ENCODE measurements at regions of chr16 and their contacts with region 1.

Region 1: GRCh38 chr16:31202414-31203375 is at the start of gene PYCARD:
- DNase-seq: peak; percentile 61
- ATAC-seq: peak; percentile 32
- H3K4me3 Mint-ChIP-seq: peak within 1 kb of the TSS; percentile 91
- H3K27ac Mint-ChIP-seq: peak within 1 kb of the TSS; percentile 86
- H3K4me1 Mint-ChIP-seq: peaks cover 56% of the 10 kb centered on the region
- H3K27me3 Mint-ChIP-seq: no peaks in the 10 kb centered on the region
- CTCF ChIP-seq: no peak
- total RNA-seq, gene PYCARD: 21.7 and 27.8 TPM in 2 replicates

Region 2: DNA sequence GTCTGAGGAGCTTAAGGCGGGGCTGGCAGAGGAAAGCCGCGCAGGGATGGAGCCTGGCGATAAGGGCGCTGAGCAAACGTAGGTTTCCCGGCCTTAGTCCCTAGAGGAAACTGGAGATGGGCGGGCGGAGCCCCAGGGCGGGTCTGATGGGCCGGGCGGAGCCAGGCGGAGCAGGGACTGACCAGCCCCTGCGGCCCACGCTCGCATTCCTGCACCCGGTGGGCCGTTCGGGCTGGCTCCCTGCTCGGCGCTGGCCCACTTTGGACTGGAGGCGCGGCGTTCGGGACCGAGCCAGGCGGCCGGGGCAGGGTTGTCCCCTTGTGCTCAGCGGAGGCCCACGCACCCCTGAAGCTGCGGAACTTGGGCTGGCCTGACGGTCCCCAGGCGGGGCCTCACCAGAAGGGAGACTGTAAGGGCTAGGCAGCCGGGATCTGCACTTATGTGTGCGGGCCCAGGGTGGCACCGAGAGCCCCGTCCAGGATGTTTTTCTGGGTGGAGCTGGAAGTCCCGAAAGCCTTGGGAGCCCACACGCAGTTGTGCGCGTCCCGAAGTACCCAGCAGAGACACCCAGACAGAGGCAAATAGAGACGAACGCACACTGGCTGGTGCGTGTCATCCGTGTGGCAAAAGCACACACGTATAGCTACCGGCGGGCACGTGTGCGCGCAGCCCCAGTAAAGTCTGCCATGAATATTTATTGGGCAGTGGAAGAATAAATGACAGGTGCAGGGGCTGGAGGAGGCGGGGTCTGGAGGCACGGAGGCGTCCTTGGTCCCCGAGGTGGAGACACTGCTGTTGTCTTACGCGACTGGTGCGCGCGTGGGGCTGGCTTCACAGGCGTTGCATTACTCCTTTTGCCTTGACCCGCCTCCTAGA is 12.8 kb after region 1 on chr16:
- CTCF ChIA-PET with region 1: interaction called, 5 read pairs
- POLR2A ChIA-PET with region 1: interaction called, 34 read pairs
- intact Hi-C with region 1: loop called (anchors 1 kb)
- DNase-seq: peak; percentile 37
- ATAC-seq: peak; percentile 63
- H3K4me3 Mint-ChIP-seq: peak overlapping the region; percentile 83
- H3K27ac Mint-ChIP-seq: no peak overlapping the region
- H3K4me1 Mint-ChIP-seq: peaks cover 48% of the 10 kb centered on the region
- H3K27me3 Mint-ChIP-seq: peaks cover 19% of the 10 kb centered on the region
- CTCF ChIP-seq: no peak

Region 3: GRCh38 chr16:31260136-31260918 is 57.6 kb after region 1 on chr16:
- CTCF ChIA-PET with region 1: no interaction called
- POLR2A ChIA-PET with region 1: interaction called, 22 read pairs
- intact Hi-C with region 1: loop called (anchors 5 kb)
- DNase-seq: no peak
- ATAC-seq: no peak
- H3K4me3 Mint-ChIP-seq: peak overlapping the region; percentile 85
- H3K27ac Mint-ChIP-seq: peak overlapping the region; percentile 82
- H3K4me1 Mint-ChIP-seq: peaks cover 60% of the 10 kb centered on the region
- H3K27me3 Mint-ChIP-seq: no peaks in the 10 kb centered on the region
- CTCF ChIP-seq: no peak

Region 4: GRCh38 chr16:31333686-31334649 is 131.3 kb after region 1 on chr16:
- CTCF ChIA-PET with region 1: interaction called, 20 read pairs
- POLR2A ChIA-PET with region 1: interaction called, 5 read pairs
- intact Hi-C with region 1: loop called (anchors 1 kb)
- DNase-seq: no peak
- ATAC-seq: peak; percentile 91
- H3K4me3 Mint-ChIP-seq: no peak overlapping the region
- H3K27ac Mint-ChIP-seq: no peak overlapping the region
- H3K4me1 Mint-ChIP-seq: peaks cover 18% of the 10 kb centered on the region
- H3K27me3 Mint-ChIP-seq: peaks cover 13% of the 10 kb centered on the region
- CTCF ChIP-seq: no peak

Region 5: GRCh38 chr16:31440516-31441184 is 238.0 kb after region 1 on chr16:
- CTCF ChIA-PET with region 1: no interaction called
- POLR2A ChIA-PET with region 1: interaction called, 4 read pairs
- intact Hi-C with region 1: loop called (anchors 2 kb)
- DNase-seq: no peak
- ATAC-seq: no peak
- H3K4me3 Mint-ChIP-seq: peak overlapping the region; percentile 24
- H3K27ac Mint-ChIP-seq: no peak overlapping the region
- H3K4me1 Mint-ChIP-seq: peaks cover 19% of the 10 kb centered on the region
- H3K27me3 Mint-ChIP-seq: peaks cover 2% of the 10 kb centered on the region
- CTCF ChIP-seq: no peak

Measured in activated B cell treated with CpG ODN at 0.5 μM for 24 hours (primary cell).